Activated T-helper 2 cell treated with anti-CD3 and anti-CD28 coated beads, Interferon-gamma antibody, Interleukin-2, Interleukin-4, amounts not matched to agents 10 μg/mL and 5 μg/mL and 100 μg/mL, durations not matched to agents 14 hours and 24 hours and 36 hours (primary cell): ENCODE measurements at regions of chr18 and their contacts with region 1.

Region 1: DNA sequence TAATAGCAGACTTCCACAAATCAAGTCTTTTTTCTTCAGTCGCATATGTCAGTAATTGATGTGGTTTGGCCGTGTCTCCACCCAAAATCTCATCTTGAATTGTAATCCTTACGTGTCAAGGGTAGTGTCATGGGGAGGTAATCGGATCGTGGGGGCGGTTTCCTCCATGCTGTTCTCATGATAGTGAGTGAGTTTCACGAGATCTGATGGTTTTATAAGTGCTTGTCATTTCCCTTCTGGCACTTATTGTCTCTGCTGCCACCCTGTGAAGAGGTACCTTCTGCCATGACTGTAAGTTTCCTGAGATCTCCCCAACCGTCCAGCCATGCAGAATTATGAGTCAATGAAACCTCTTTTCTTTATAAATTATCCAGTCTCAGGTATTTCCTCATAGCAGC is 478.8 kb downstream of the PTPRM start:
- DNase-seq: no peak
- H3K4me3 Mint-ChIP-seq: no peak overlapping the region
- H3K27ac Mint-ChIP-seq: no peak overlapping the region
- H3K4me1 Mint-ChIP-seq: peaks cover 7% of the 10 kb centered on the region
- H3K27me3 Mint-ChIP-seq: no peaks in the 10 kb centered on the region

Region 2: GRCh38 chr18:7566567-7567473 is 479.1 kb before region 1 on chr18 and contains the start of gene PTPRM:
- intact Hi-C with region 1: loop called (anchors 5 kb)
- DNase-seq: peak; percentile 34
- H3K4me3 Mint-ChIP-seq: peak within 1 kb of the TSS; percentile 39
- H3K27ac Mint-ChIP-seq: no peak within 1 kb of the TSS
- H3K4me1 Mint-ChIP-seq: no peaks in the 10 kb centered on the region
- H3K27me3 Mint-ChIP-seq: peaks cover 54% of the 10 kb centered on the region
- total RNA-seq, gene PTPRM: 4.5 and 5.6 TPM in 2 replicates

Region 3: GRCh38 chr18:7958081-7958896 is 87.6 kb before region 1 on chr18:
- intact Hi-C with region 1: loop called (anchors 5 kb)
- DNase-seq: no peak
- H3K4me3 Mint-ChIP-seq: peak overlapping the region; percentile 68
- H3K27ac Mint-ChIP-seq: peak overlapping the region; percentile 85
- H3K4me1 Mint-ChIP-seq: peaks cover 35% of the 10 kb centered on the region
- H3K27me3 Mint-ChIP-seq: no peaks in the 10 kb centered on the region